CD4-positive, alpha-beta T cell (primary cell): ENCODE measurements at regions of chr14 and their contacts with region 1.

Region 1: GRCh38 chr14:76962303-76962660 is 66.2 kb downstream of the IRF2BPL start:
- DNase-seq: no peak
- ATAC-seq: no peak
- H3K4me3 ChIP-seq: peak overlapping the region; percentile 52
- H3K4me3 Mint-ChIP-seq: peak overlapping the region; percentile 74
- H3K27ac ChIP-seq: peak overlapping the region; percentile 77 to 91
- H3K27ac Mint-ChIP-seq: peak overlapping the region; percentile 89
- H3K4me1 ChIP-seq: peaks cover 71% of the 10 kb centered on the region
- H3K4me1 Mint-ChIP-seq: peaks cover 79% of the 10 kb centered on the region
- H3K27me3 ChIP-seq: no peaks in the 10 kb centered on the region
- H3K27me3 Mint-ChIP-seq: no peaks in the 10 kb centered on the region
- CTCF ChIP-seq: no peak

Region 2: GRCh38 chr14:76832503-76832988 is 129.7 kb before region 1 on chr14:
- CTCF ChIA-PET with region 1: no interaction called
- POLR2A ChIA-PET with region 1: no interaction called
- intact Hi-C with region 1: no loop called
- DNase-seq: peak in 2 of 14 experiments; percentile 32 to 33
- ATAC-seq: no peak
- H3K4me3 ChIP-seq: no peak overlapping the region
- H3K4me3 Mint-ChIP-seq: no peak overlapping the region
- H3K27ac ChIP-seq: no peak overlapping the region
- H3K27ac Mint-ChIP-seq: no peak overlapping the region
- H3K4me1 ChIP-seq: no peaks in the 10 kb centered on the region
- H3K4me1 Mint-ChIP-seq: no peaks in the 10 kb centered on the region
- H3K27me3 ChIP-seq: peaks cover 0 to 3% of the 10 kb centered on the region in 2 experiments
- H3K27me3 Mint-ChIP-seq: peaks cover 8% of the 10 kb centered on the region
- CTCF ChIP-seq: no peak

Region 3: GRCh38 chr14:76929927-76930326 is 32.4 kb before region 1 on chr14:
- CTCF ChIA-PET with region 1: interaction called, 4 read pairs
- POLR2A ChIA-PET with region 1: interaction called, 40 read pairs
- intact Hi-C with region 1: no loop called
- DNase-seq: peak; percentile 40 to 92 (median 60)
- ATAC-seq: peak; percentile 84
- H3K4me3 ChIP-seq: peak overlapping the region; percentile 20
- H3K4me3 Mint-ChIP-seq: peak overlapping the region; percentile 68
- H3K27ac ChIP-seq: peak overlapping the region; percentile 43 to 52
- H3K27ac Mint-ChIP-seq: peak overlapping the region; percentile 86
- H3K4me1 ChIP-seq: peaks cover 78% of the 10 kb centered on the region
- H3K4me1 Mint-ChIP-seq: peaks cover 75% of the 10 kb centered on the region
- H3K27me3 ChIP-seq: no peaks in the 10 kb centered on the region
- H3K27me3 Mint-ChIP-seq: no peaks in the 10 kb centered on the region
- CTCF ChIP-seq: no peak

Region 4: GRCh38 chr14:76977793-76978720 is 15.8 kb after region 1 on chr14:
- CTCF ChIA-PET with region 1: interaction called, 13 read pairs
- POLR2A ChIA-PET with region 1: interaction called, 16 read pairs
- intact Hi-C with region 1: no loop called
- DNase-seq: peak; percentile 35 to 96 (median 71)
- ATAC-seq: peak; percentile 96
- H3K4me3 ChIP-seq: no peak overlapping the region
- H3K4me3 Mint-ChIP-seq: no peak overlapping the region
- H3K27ac ChIP-seq: peak overlapping the region; percentile 30 to 40
- H3K27ac Mint-ChIP-seq: peak overlapping the region; percentile 82
- H3K4me1 ChIP-seq: peaks cover 23% of the 10 kb centered on the region
- H3K4me1 Mint-ChIP-seq: peaks cover 20% of the 10 kb centered on the region
- H3K27me3 ChIP-seq: no peaks in the 10 kb centered on the region
- H3K27me3 Mint-ChIP-seq: no peaks in the 10 kb centered on the region
- CTCF ChIP-seq: no peak

Region 5: GRCh38 chr14:77023001-77023996 is 61.0 kb after region 1 on chr14:
- CTCF ChIA-PET with region 1: interaction called, 15 read pairs
- POLR2A ChIA-PET with region 1: interaction called, 81 read pairs
- intact Hi-C with region 1: loop called in 1 of 2 experiments (anchors 2 kb)
- DNase-seq: peak in 1 of 14 experiments; percentile 33
- ATAC-seq: no peak
- H3K4me3 ChIP-seq: no peak overlapping the region
- H3K4me3 Mint-ChIP-seq: peak overlapping the region; percentile 69
- H3K27ac ChIP-seq: no peak overlapping the region
- H3K27ac Mint-ChIP-seq: peak overlapping the region; percentile 90
- H3K4me1 ChIP-seq: peaks cover 54% of the 10 kb centered on the region
- H3K4me1 Mint-ChIP-seq: peaks cover 36% of the 10 kb centered on the region
- H3K27me3 ChIP-seq: no peaks in the 10 kb centered on the region
- H3K27me3 Mint-ChIP-seq: no peaks in the 10 kb centered on the region
- CTCF ChIP-seq: no peak

Region 6: GRCh38 chr14:77040059-77040740 is 77.9 kb after region 1 on chr14:
- CTCF ChIA-PET with region 1: interaction called, 7 read pairs
- POLR2A ChIA-PET with region 1: interaction called, 69 read pairs
- intact Hi-C with region 1: no loop called
- DNase-seq: peak; percentile 96 to 100 (median 99)
- ATAC-seq: peak; percentile 79
- H3K4me3 ChIP-seq: peak overlapping the region; percentile 46
- H3K4me3 Mint-ChIP-seq: peak overlapping the region; percentile 84
- H3K27ac ChIP-seq: peak overlapping the region; percentile 93 to 96
- H3K27ac Mint-ChIP-seq: peak overlapping the region; percentile 100
- H3K4me1 ChIP-seq: peaks cover 86% of the 10 kb centered on the region
- H3K4me1 Mint-ChIP-seq: peaks cover 96% of the 10 kb centered on the region
- H3K27me3 ChIP-seq: no peaks in the 10 kb centered on the region
- H3K27me3 Mint-ChIP-seq: no peaks in the 10 kb centered on the region
- CTCF ChIP-seq: no peak

Region 7: GRCh38 chr14:77400219-77400618 is 437.9 kb after region 1 on chr14:
- CTCF ChIA-PET with region 1: no interaction called
- POLR2A ChIA-PET with region 1: no interaction called
- intact Hi-C with region 1: no loop called
- DNase-seq: no peak
- ATAC-seq: no peak
- H3K4me3 ChIP-seq: no peak overlapping the region
- H3K4me3 Mint-ChIP-seq: no peak overlapping the region
- H3K27ac ChIP-seq: no peak overlapping the region
- H3K27ac Mint-ChIP-seq: no peak overlapping the region
- H3K4me1 ChIP-seq: no peaks in the 10 kb centered on the region
- H3K4me1 Mint-ChIP-seq: no peaks in the 10 kb centered on the region
- H3K27me3 ChIP-seq: no peaks in the 10 kb centered on the region
- H3K27me3 Mint-ChIP-seq: no peaks in the 10 kb centered on the region
- CTCF ChIP-seq: no peak

Region 8: GRCh38 chr14:77478796-77479195 is 516.5 kb after region 1 on chr14:
- CTCF ChIA-PET with region 1: no interaction called
- POLR2A ChIA-PET with region 1: no interaction called
- intact Hi-C with region 1: no loop called
- DNase-seq: no peak
- ATAC-seq: no peak
- H3K4me3 ChIP-seq: no peak overlapping the region
- H3K4me3 Mint-ChIP-seq: no peak overlapping the region
- H3K27ac ChIP-seq: no peak overlapping the region
- H3K27ac Mint-ChIP-seq: no peak overlapping the region
- H3K4me1 ChIP-seq: no peaks in the 10 kb centered on the region
- H3K4me1 Mint-ChIP-seq: no peaks in the 10 kb centered on the region
- H3K27me3 ChIP-seq: no peaks in the 10 kb centered on the region
- H3K27me3 Mint-ChIP-seq: no peaks in the 10 kb centered on the region
- CTCF ChIP-seq: no peak